A673 (cell line): ENCODE measurements at regions of chr18 and their contacts with region 1.

Region 1: GRCh38 chr18:69674292-69674877 is 273.3 kb downstream of the CD226 start:
- DNase-seq: peak; percentile 9
- H3K4me3 ChIP-seq: no peak overlapping the region
- H3K27ac ChIP-seq: no peak overlapping the region
- H3K4me1 ChIP-seq: peaks cover 7% of the 10 kb centered on the region
- H3K27me3 ChIP-seq: no peaks in the 10 kb centered on the region
- CTCF ChIP-seq: no peak

Region 2: GRCh38 chr18:68679528-68679927 is 994.9 kb before region 1 on chr18:
- CTCF ChIA-PET with region 1: no interaction called
- POLR2A ChIA-PET with region 1: no interaction called
- intact Hi-C with region 1: no loop called
- DNase-seq: no peak
- H3K4me3 ChIP-seq: no peak overlapping the region
- H3K27ac ChIP-seq: no peak overlapping the region
- H3K4me1 ChIP-seq: no peaks in the 10 kb centered on the region
- H3K27me3 ChIP-seq: no peaks in the 10 kb centered on the region
- CTCF ChIP-seq: no peak

Region 3: GRCh38 chr18:69518989-69519388 is 155.4 kb before region 1 on chr18:
- CTCF ChIA-PET with region 1: no interaction called
- POLR2A ChIA-PET with region 1: no interaction called
- intact Hi-C with region 1: no loop called
- DNase-seq: no peak
- H3K4me3 ChIP-seq: no peak overlapping the region
- H3K27ac ChIP-seq: no peak overlapping the region
- H3K4me1 ChIP-seq: no peaks in the 10 kb centered on the region
- H3K27me3 ChIP-seq: no peaks in the 10 kb centered on the region
- CTCF ChIP-seq: no peak

Region 4: GRCh38 chr18:69715191-69715795 is 40.9 kb after region 1 on chr18:
- CTCF ChIA-PET with region 1: no interaction called
- POLR2A ChIA-PET with region 1: interaction called, 12 read pairs
- intact Hi-C with region 1: loop called (anchors 10 kb)
- DNase-seq: no peak
- H3K4me3 ChIP-seq: no peak overlapping the region
- H3K27ac ChIP-seq: no peak overlapping the region
- H3K4me1 ChIP-seq: no peaks in the 10 kb centered on the region
- H3K27me3 ChIP-seq: no peaks in the 10 kb centered on the region
- CTCF ChIP-seq: no peak

Region 5: GRCh38 chr18:70671889-70672565 is 997.6 kb after region 1 on chr18:
- CTCF ChIA-PET with region 1: no interaction called
- POLR2A ChIA-PET with region 1: no interaction called
- intact Hi-C with region 1: no loop called
- DNase-seq: no peak
- H3K4me3 ChIP-seq: no peak overlapping the region
- H3K27ac ChIP-seq: no peak overlapping the region
- H3K4me1 ChIP-seq: no peaks in the 10 kb centered on the region
- H3K27me3 ChIP-seq: no peaks in the 10 kb centered on the region
- CTCF ChIP-seq: no peak